ENCODE measurements at regions of chr13 and their contacts with region 1.

Region 1: GRCh38 chr13:95275322-95276036 is 25.8 kb downstream of the ABCC4 start:
- DNase-seq: peak; percentile 73
- ATAC-seq: peak; percentile 21; the same call in 2 of the 3 replicates
- H3K4me3 ChIP-seq: no peak overlapping the region
- H3K27ac ChIP-seq: no peak overlapping the region
- H3K4me1 ChIP-seq: peaks cover 45% of the 10 kb centered on the region
- H3K27me3 ChIP-seq: no peaks in the 10 kb centered on the region
- CTCF ChIP-seq: no peak
- EP300 ChIP-seq: peak in 1 of 2 experiments; percentile 51; a peak in 1 of 4 replicates
- POLR2A ChIP-seq: no peak
- RAD21 ChIP-seq: no peak

Region 2: DNA sequence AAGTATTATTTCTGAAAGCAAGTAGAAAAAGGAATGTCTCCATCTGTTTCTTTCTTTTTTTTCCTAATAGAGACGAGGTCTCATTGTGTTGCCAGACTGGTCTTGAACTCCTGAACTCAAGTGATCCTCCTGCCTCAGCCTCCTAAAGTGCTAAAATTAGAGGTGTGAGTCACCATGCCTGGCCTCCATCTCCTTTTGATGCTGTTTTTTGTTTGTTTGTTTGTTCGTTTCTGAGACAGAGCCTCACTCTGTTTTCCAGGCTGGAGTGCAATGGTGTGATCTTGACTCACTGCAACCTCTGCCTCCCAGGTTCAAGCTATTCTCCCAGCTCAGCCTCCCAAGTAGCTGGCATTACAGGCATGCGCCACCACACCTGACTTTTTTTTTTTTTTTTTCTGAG is 40.3 kb after region 1 on chr13:
- CTCF ChIA-PET with region 1: no interaction called
- POLR2A ChIA-PET with region 1: no interaction called
- in situ Hi-C with region 1: no loop called
- intact Hi-C with region 1: loop called (anchors 1 kb)
- DNase-seq: no peak
- ATAC-seq: no peak
- H3K4me3 ChIP-seq: no peak overlapping the region
- H3K27ac ChIP-seq: no peak overlapping the region
- H3K4me1 ChIP-seq: peaks cover 20% of the 10 kb centered on the region
- H3K27me3 ChIP-seq: no peaks in the 10 kb centered on the region
- CTCF ChIP-seq: no peak
- EP300 ChIP-seq: no peak
- POLR2A ChIP-seq: no peak
- RAD21 ChIP-seq: no peak